CD14-positive monocyte (primary cell): ENCODE measurements at regions of chr2 and their contacts with region 1.

Region 1: DNA sequence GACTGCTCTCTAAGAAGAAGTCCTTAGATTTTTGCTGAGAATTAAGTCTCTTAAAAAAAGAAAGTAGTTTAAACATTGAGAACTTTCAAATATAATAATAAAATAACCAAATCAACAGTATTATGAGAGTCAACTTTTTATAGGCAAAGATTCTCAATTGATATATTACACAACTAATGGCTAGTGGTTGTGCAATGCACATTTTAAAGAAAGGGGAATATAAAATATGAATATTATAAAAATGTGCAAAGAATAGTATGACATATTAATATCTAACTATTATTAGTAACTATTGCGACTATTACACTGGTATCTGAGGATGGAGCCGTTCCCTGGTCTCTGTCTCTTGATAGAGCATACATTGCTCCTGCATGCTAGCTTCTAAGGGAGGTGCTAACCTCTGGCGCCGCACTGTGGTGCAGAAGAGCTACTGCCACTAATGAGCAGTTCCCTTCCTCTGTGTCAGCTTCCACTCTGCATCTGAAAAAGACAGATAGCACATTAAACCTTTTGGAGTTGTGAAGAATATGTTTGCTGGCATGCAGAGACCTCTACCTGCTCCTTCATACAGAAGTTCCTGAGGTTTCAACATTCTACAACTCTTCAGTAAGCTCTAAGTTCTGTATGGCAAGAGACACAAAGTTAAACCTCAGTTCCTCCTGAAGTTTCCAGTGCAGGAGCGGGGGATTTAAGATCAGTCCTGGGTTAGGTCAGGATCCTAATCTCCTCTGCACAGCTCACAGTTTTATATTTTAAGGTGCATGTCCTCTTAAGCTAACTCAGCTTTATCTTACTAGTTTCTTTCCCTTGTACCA is 3.5 kb upstream of the SLC9A2 start:
- DNase-seq: peak; percentile 44 to 66 (median 65)
- H3K4me3 ChIP-seq: no peak overlapping the region
- H3K4me3 Mint-ChIP-seq: no peak overlapping the region
- H3K27ac ChIP-seq: no peak overlapping the region
- H3K27ac Mint-ChIP-seq: no peak overlapping the region
- H3K4me1 ChIP-seq: peaks cover 12 to 16% of the 10 kb centered on the region in 2 donors
- H3K4me1 Mint-ChIP-seq: peaks cover 14% of the 10 kb centered on the region
- H3K27me3 ChIP-seq: peaks cover 53 to 61% of the 10 kb centered on the region in 2 donors
- H3K27me3 Mint-ChIP-seq: peaks cover 34 to 49% (median 42%) of the 10 kb centered on the region in 3 donors
- CTCF ChIP-seq: peak; percentile 93

Region 2: GRCh38 chr2:102473020-102473419 is 142.8 kb before region 1 on chr2 and contains the start of gene SLC9A4:
- intact Hi-C with region 1: loop called (anchors 5 kb)
- DNase-seq: peak; percentile 27 to 36 (median 34)
- H3K4me3 ChIP-seq: no peak within 1 kb of the TSS
- H3K4me3 Mint-ChIP-seq: no peak within 1 kb of the TSS
- H3K27ac ChIP-seq: no peak within 1 kb of the TSS
- H3K27ac Mint-ChIP-seq: no peak within 1 kb of the TSS
- H3K4me1 ChIP-seq: no peaks in the 10 kb centered on the region
- H3K4me1 Mint-ChIP-seq: no peaks in the 10 kb centered on the region
- H3K27me3 ChIP-seq: peaks cover 10 to 15% of the 10 kb centered on the region in 2 donors
- H3K27me3 Mint-ChIP-seq: peaks cover 1 to 24% (median 5%) of the 10 kb centered on the region in 3 donors
- CTCF ChIP-seq: peak; percentile 93
- polyA plus RNA-seq, gene SLC9A4: not detected

Region 3: GRCh38 chr2:102520028-102520427 is 95.8 kb before region 1 on chr2:
- intact Hi-C with region 1: loop called (anchors 5 kb)
- DNase-seq: peak; percentile 21 to 47 (median 32)
- H3K4me3 ChIP-seq: no peak overlapping the region
- H3K4me3 Mint-ChIP-seq: no peak overlapping the region
- H3K27ac ChIP-seq: no peak overlapping the region
- H3K27ac Mint-ChIP-seq: no peak overlapping the region
- H3K4me1 ChIP-seq: no peaks in the 10 kb centered on the region
- H3K4me1 Mint-ChIP-seq: no peaks in the 10 kb centered on the region
- H3K27me3 ChIP-seq: no peaks in the 10 kb centered on the region
- H3K27me3 Mint-ChIP-seq: peaks cover 4 to 6% (median 4%) of the 10 kb centered on the region in 3 donors
- CTCF ChIP-seq: peak; percentile 80

Region 4: DNA sequence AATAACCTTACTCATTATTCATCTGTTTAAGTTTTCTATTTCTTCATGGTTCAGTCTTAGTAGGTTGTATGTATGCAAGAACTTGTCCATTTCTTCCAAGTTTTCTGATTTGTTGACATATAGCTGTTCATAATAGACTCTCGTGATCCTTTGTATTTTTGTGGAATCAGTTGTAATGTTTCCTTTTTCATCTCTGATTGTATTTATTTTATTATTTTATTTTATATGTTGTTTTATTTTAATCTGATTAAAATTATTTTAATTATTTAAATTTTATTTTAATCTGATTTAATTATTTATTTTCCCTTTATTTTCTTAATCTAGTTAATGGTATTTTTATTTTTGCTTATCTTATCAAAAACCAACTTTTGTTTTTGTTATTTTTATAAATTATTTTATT is 39.9 kb before region 1 on chr2:
- intact Hi-C with region 1: no loop called
- DNase-seq: no peak
- H3K4me3 ChIP-seq: no peak overlapping the region
- H3K4me3 Mint-ChIP-seq: no peak overlapping the region
- H3K27ac ChIP-seq: no peak overlapping the region
- H3K27ac Mint-ChIP-seq: no peak overlapping the region
- H3K4me1 ChIP-seq: no peaks in the 10 kb centered on the region
- H3K4me1 Mint-ChIP-seq: no peaks in the 10 kb centered on the region
- H3K27me3 ChIP-seq: no peaks in the 10 kb centered on the region
- H3K27me3 Mint-ChIP-seq: peaks cover 0 to 9% (median 0%) of the 10 kb centered on the region in 3 donors
- CTCF ChIP-seq: no peak